GM12878 (cell line): ENCODE measurements at regions of chr12 and their contacts with region 1.

Region 1: GRCh38 chr12:57063991-57064685 is 14.2 kb upstream of the MYO1A start:
- DNase-seq: peak; percentile 69
- ATAC-seq: peak; percentile 96
- H3K4me3 ChIP-seq: peak overlapping the region; percentile 48; the same call in 1 of the 2 replicates
- H3K27ac ChIP-seq: peak overlapping the region; percentile 59
- H3K4me1 ChIP-seq: peaks cover 10% of the 10 kb centered on the region
- H3K27me3 ChIP-seq: no peaks in the 10 kb centered on the region
- CTCF ChIP-seq: no peak
- EP300 ChIP-seq: no peak
- POLR2A ChIP-seq: no peak
- RAD21 ChIP-seq: no peak

Region 2: DNA sequence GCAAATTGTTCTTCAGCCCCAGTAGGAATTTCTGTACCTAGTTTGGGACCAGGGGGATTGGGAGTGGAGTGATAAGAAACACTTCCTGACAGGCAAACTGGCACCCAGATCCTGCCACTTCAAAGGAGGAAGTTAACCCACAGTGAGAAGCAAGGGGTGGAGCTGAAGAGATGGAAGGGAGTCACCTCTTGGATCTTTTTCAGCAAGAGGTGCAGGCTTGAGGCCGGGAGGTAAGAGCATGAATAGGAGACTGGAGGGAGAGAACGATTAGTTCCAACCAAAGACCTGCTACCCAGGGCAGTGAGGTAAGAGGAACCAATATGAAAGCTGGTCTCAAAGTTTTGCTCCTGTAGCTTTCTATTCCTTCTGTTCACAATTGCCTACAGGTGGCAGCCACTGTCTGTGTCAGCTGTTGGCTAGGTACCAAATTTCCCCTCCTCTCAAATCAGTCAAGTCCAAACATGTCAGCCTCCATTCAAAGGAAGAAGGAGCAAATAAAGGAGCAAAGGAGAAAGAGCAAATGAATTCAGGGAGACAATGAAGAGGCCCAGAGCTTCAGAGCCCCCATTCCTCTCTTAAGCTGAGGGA is 32.9 kb before region 1 on chr12:
- CTCF ChIA-PET with region 1: interaction called, 64 read pairs
- POLR2A ChIA-PET with region 1: interaction called, 5 read pairs
- RAD21 ChIA-PET with region 1: interaction called, 13 read pairs
- SMC1A ChIA-PET with region 1: interaction called, 19 read pairs
- in situ Hi-C with region 1: no loop called
- intact Hi-C with region 1: no loop called
- DNase-seq: no peak
- ATAC-seq: peak; percentile 81
- H3K4me3 ChIP-seq: no peak overlapping the region
- H3K27ac ChIP-seq: peak overlapping the region; percentile 25; the same call in 1 of the 2 replicates
- H3K4me1 ChIP-seq: peaks cover 11% of the 10 kb centered on the region
- H3K27me3 ChIP-seq: no peaks in the 10 kb centered on the region; a peak in 1 of 4 replicates
- CTCF ChIP-seq: peak; percentile 3 to 35 (median 26); a peak in 3 of 6 replicates
- EP300 ChIP-seq: no peak
- POLR2A ChIP-seq: no peak
- RAD21 ChIP-seq: peak; percentile 50

Region 3: GRCh38 chr12:57078519-57079404 is 14.6 kb after region 1 on chr12 and contains the start of gene NEMP1:
- CTCF ChIA-PET with region 1: interaction called, 48 read pairs
- POLR2A ChIA-PET with region 1: interaction called, 18 read pairs
- RAD21 ChIA-PET with region 1: interaction called, 23 read pairs
- SMC1A ChIA-PET with region 1: interaction called, 41 read pairs
- in situ Hi-C with region 1: no loop called
- intact Hi-C with region 1: no loop called
- DNase-seq: peak; percentile 100
- ATAC-seq: peak; percentile 99
- H3K4me3 ChIP-seq: peak within 1 kb of the TSS; percentile 96
- H3K27ac ChIP-seq: peak within 1 kb of the TSS; percentile 92
- H3K4me1 ChIP-seq: peaks cover 6% of the 10 kb centered on the region; the same call in 1 of the 2 replicates
- H3K27me3 ChIP-seq: no peaks in the 10 kb centered on the region
- CTCF ChIP-seq: no peak
- EP300 ChIP-seq: no peak
- POLR2A ChIP-seq: peak; percentile 90
- RAD21 ChIP-seq: no peak
- polyA plus RNA-seq, gene NEMP1: 4.0 to 4.7 TPM

Region 4: DNA sequence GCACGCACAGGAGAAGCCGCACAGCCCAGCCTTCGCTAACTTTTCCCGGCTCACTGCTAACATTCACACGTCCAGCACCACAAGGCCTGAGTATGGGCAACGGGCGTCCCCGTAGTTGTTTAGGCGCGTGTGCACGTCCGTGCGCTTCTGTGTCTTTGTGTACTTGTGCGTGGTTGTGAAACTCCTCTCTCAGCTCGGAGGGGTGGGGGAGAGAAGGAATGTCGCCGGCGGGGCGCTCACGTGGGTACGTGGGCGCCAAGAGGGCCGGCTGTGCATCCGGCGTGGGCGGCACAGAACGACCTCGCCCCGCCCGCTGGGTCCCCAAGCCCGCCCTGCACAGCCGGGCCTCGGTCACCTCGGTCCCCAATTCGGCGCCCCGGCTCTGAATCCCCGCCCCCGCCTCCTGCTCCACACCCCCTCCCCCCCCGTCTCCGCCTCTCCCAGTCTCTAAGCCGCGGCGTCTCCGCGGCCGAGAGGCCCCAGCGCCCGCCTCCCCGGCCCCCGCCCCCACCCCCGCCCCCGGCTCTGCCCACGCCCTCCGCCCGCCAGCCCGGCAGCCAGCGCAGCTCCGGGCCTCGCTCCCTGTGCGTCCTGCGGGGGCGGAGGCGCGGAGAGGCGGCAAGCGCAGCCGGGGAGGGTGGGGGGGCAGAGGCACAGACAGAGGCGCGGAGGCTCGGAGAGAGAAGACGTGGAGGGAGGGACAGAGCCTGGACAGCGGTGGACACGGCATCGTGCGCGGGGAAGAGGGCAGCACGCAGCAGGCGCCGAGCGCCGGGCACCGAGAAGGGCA is 24.5 kb after region 1 on chr12 and contains the start of gene NAB2:
- CTCF ChIA-PET with region 1: interaction called, 205 read pairs
- POLR2A ChIA-PET with region 1: interaction called, 74 read pairs
- RAD21 ChIA-PET with region 1: interaction called, 199 read pairs
- SMC1A ChIA-PET with region 1: interaction called, 169 read pairs
- in situ Hi-C with region 1: no loop called
- intact Hi-C with region 1: loop called (anchors 1 kb)
- DNase-seq: peak; percentile 72
- ATAC-seq: peak; percentile 69
- H3K4me3 ChIP-seq: peak within 1 kb of the TSS; percentile 95
- H3K27ac ChIP-seq: peak within 1 kb of the TSS; percentile 98
- H3K4me1 ChIP-seq: peaks cover 31% of the 10 kb centered on the region
- H3K27me3 ChIP-seq: no peaks in the 10 kb centered on the region
- CTCF ChIP-seq: no peak
- EP300 ChIP-seq: 0 out of 4 replicates have a peak, but pooled peaks of 1 of the 2 experiments have one; percentile 48
- POLR2A ChIP-seq: peak; percentile 82
- RAD21 ChIP-seq: no peak
- polyA plus RNA-seq, gene NAB2: 0.35 to 1.0 TPM

Region 5: GRCh38 chr12:57416039-57416996 is 352.2 kb after region 1 on chr12:
- CTCF ChIA-PET with region 1: no interaction called
- POLR2A ChIA-PET with region 1: no interaction called
- RAD21 ChIA-PET with region 1: no interaction called
- SMC1A ChIA-PET with region 1: no interaction called
- in situ Hi-C with region 1: no loop called
- intact Hi-C with region 1: no loop called
- DNase-seq: no peak
- ATAC-seq: peak; percentile 43; the same call in 2 of the 3 replicates
- H3K4me3 ChIP-seq: no peak overlapping the region
- H3K27ac ChIP-seq: no peak overlapping the region
- H3K4me1 ChIP-seq: no peaks in the 10 kb centered on the region; the same call in 1 of the 2 replicates
- H3K27me3 ChIP-seq: no peaks in the 10 kb centered on the region
- CTCF ChIP-seq: no peak
- EP300 ChIP-seq: no peak
- POLR2A ChIP-seq: no peak
- RAD21 ChIP-seq: no peak